ENCODE measurements at regions of chr6 and their contacts with region 1.

Region 1: DNA sequence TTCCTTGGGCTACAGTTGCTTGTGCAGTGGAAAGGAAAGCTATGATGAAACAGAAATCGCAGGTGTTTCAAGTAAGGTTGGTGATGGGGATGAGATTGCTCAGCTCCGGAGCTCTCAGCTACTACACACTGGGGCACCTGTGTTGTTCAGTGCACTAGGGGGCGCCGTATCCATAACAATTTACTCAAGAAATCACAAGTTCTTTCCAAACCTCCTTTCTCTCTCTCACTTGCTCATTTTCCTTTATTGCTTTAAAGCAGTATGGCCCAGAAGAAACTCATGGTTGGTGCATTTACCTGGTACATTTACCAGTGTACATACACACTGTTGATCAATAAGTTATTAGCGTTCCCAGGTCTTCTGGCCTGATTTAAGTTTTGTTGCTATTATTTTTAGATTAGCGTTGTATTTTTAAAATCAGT is 235.2 kb upstream of the TAB2 start:
- DNase-seq: peak; percentile 94
- H3K4me3 Mint-ChIP-seq: no peak overlapping the region
- H3K27ac Mint-ChIP-seq: peak overlapping the region; percentile 90
- H3K4me1 Mint-ChIP-seq: peaks cover 84% of the 10 kb centered on the region
- H3K27me3 Mint-ChIP-seq: no peaks in the 10 kb centered on the region

Region 2: DNA sequence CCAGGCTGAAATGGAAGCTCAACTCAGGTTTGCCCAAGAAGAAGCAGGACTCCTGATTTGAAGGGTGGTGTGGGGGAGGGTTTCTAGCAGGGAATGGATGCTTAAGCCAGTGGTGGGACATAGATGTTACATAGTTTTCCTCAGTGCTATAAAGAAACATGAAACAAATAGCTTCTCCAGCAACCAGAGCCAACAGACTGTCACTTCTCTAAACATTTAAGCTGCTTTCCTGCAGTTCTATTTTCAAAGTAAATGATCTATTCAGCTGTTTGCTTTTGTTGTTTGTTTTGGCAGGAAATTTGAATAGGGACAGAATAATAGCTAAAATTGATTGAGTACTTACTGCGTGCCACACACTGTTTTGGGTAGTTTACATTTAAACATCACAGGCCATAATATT is 166.5 kb before region 1 on chr6:
- CTCF ChIA-PET with region 1: no interaction called
- POLR2A ChIA-PET with region 1: no interaction called
- DNase-seq: no peak
- H3K4me3 Mint-ChIP-seq: no peak overlapping the region
- H3K27ac Mint-ChIP-seq: no peak overlapping the region
- H3K4me1 Mint-ChIP-seq: no peaks in the 10 kb centered on the region
- H3K27me3 Mint-ChIP-seq: no peaks in the 10 kb centered on the region

Region 3: GRCh38 chr6:149094156-149094555 is 11.9 kb after region 1 on chr6:
- CTCF ChIA-PET with region 1: interaction called, 23 read pairs
- POLR2A ChIA-PET with region 1: interaction called, 3 read pairs
- DNase-seq: no peak
- H3K4me3 Mint-ChIP-seq: peak overlapping the region; percentile 54
- H3K27ac Mint-ChIP-seq: peak overlapping the region; percentile 90
- H3K4me1 Mint-ChIP-seq: peaks cover 80% of the 10 kb centered on the region
- H3K27me3 Mint-ChIP-seq: no peaks in the 10 kb centered on the region

Measured in activated CD4-positive, alpha-beta T cell treated with anti-CD3 and anti-CD28 coated beads, Interleukin-2, amount 10 ng/mL, durations not matched to agents 7 days and 5 days (primary cell).